Activated B cell treated with CpG ODN at 0.5 μM for 24 hours (primary cell): ENCODE measurements at regions of chr12 and their contacts with region 1.

Region 1: GRCh38 chr12:108646600-108647579 is 13.2 kb upstream of the SELPLG start:
- DNase-seq: no peak
- ATAC-seq: no peak
- H3K4me3 Mint-ChIP-seq: peak overlapping the region; percentile 17
- H3K27ac Mint-ChIP-seq: peak overlapping the region; percentile 60
- H3K4me1 Mint-ChIP-seq: peaks cover 57% of the 10 kb centered on the region
- H3K27me3 Mint-ChIP-seq: no peaks in the 10 kb centered on the region
- CTCF ChIP-seq: no peak

Region 2: GRCh38 chr12:108611884-108612415 is 34.9 kb before region 1 on chr12:
- CTCF ChIA-PET with region 1: interaction called, 137 read pairs
- POLR2A ChIA-PET with region 1: no interaction called
- intact Hi-C with region 1: loop called (anchors 1 kb)
- DNase-seq: no peak
- ATAC-seq: peak; percentile 21
- H3K4me3 Mint-ChIP-seq: no peak overlapping the region
- H3K27ac Mint-ChIP-seq: peak overlapping the region; percentile 24
- H3K4me1 Mint-ChIP-seq: peaks cover 52% of the 10 kb centered on the region
- H3K27me3 Mint-ChIP-seq: peaks cover 8% of the 10 kb centered on the region
- CTCF ChIP-seq: no peak

Region 3: GRCh38 chr12:108618079-108618952 is 28.6 kb before region 1 on chr12:
- CTCF ChIA-PET with region 1: interaction called, 137 read pairs
- POLR2A ChIA-PET with region 1: interaction called, 9 read pairs
- intact Hi-C with region 1: loop called (anchors 2 kb)
- DNase-seq: peak; percentile 76
- ATAC-seq: peak; percentile 40
- H3K4me3 Mint-ChIP-seq: peak overlapping the region; percentile 19
- H3K27ac Mint-ChIP-seq: peak overlapping the region; percentile 53
- H3K4me1 Mint-ChIP-seq: peaks cover 70% of the 10 kb centered on the region
- H3K27me3 Mint-ChIP-seq: no peaks in the 10 kb centered on the region
- CTCF ChIP-seq: peak; percentile 60